SK-N-SH (cell line): ENCODE measurements at regions of chr5 and their contacts with region 1.

Region 1: GRCh38 chr5:139765409-139766217 is 30.0 kb upstream of the PSD2 start:
- DNase-seq: peak; percentile 93
- H3K4me3 ChIP-seq: peak overlapping the region; percentile 56 to 85
- H3K27ac ChIP-seq: peak overlapping the region in 1 of 2 experiments; percentile 56; a peak in 1 of 4 replicates
- H3K4me1 ChIP-seq: peaks cover 2 to 29% of the 10 kb centered on the region in 2 experiments; a peak in 3 of 4 replicates
- H3K27me3 ChIP-seq: no peaks in the 10 kb centered on the region
- CTCF ChIP-seq: peak; percentile 97
- EP300 ChIP-seq: peak in 1 of 2 experiments; percentile 14; a peak in 1 of 4 replicates
- RAD21 ChIP-seq: peak; percentile 73

Region 2: DNA sequence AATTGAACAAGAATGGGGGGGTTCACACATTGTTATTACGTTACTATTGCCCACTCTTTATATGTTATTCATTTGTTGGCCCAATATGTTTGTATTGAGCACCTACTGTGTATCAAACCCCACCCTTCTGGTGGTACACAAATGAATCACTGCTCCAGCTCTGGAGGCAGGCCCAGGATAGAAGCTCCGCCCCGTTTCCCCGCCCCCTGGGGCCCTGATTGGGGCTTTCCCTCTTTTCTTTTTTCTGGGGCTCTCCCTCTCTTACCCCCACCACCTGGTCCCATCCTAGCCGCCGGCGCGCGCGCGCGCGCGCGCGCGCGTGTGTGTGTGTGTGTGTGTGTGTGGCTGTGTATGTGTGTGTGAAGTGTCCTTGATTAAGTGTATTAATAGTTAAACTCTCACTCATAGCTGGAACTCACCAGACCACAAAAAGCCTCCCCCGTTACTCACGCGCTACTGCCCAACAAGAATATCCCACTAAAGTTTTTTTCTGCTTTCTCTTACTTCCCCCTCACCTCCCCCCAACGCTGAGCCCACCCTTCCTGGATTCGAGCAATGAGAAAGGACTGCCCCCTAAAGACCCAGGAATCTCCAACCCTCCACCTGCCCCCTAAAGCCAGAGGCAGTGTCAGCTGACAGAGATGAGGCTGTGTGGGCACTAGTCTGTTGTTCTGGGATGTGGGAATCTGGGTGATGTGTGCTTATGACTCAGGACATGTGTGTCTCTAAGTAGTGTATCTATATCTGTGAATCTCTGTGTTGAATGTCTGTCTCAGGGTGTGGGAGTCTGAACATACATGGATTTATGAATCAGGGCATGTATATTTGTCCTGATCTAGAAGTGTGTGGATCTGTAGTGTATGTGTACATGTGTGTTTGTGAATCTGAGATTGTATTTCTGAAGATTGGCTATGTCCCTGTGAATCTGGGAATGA is 113.5 kb before region 1 on chr5:
- CTCF ChIA-PET with region 1: interaction called, 627 read pairs
- POLR2A ChIA-PET with region 1: interaction called, 5 read pairs
- DNase-seq: peak; percentile 89
- H3K4me3 ChIP-seq: peak overlapping the region; percentile 19 to 91; a peak in 3 of 4 replicates
- H3K27ac ChIP-seq: peak overlapping the region; percentile 78 to 96
- H3K4me1 ChIP-seq: peaks cover 54 to 66% of the 10 kb centered on the region in 2 experiments
- H3K27me3 ChIP-seq: no peaks in the 10 kb centered on the region
- CTCF ChIP-seq: no peak
- EP300 ChIP-seq: 0 out of 4 replicates have a peak, but pooled peaks of 1 of the 2 experiments have one; percentile 10
- RAD21 ChIP-seq: no peak

Region 3: GRCh38 chr5:139684881-139685749 is 80.5 kb before region 1 on chr5:
- CTCF ChIA-PET with region 1: interaction called, 76 read pairs
- POLR2A ChIA-PET with region 1: interaction called, 3 read pairs
- DNase-seq: peak; percentile 76
- H3K4me3 ChIP-seq: no peak overlapping the region
- H3K27ac ChIP-seq: peak overlapping the region in 1 of 2 experiments; percentile 48; a peak in 1 of 4 replicates
- H3K4me1 ChIP-seq: peaks cover 18 to 59% of the 10 kb centered on the region in 2 experiments
- H3K27me3 ChIP-seq: no peaks in the 10 kb centered on the region
- CTCF ChIP-seq: peak; percentile 34
- EP300 ChIP-seq: no peak
- RAD21 ChIP-seq: peak; percentile 31

Region 4: GRCh38 chr5:139696894-139697658 is 68.5 kb before region 1 on chr5:
- CTCF ChIA-PET with region 1: interaction called, 76 read pairs
- POLR2A ChIA-PET with region 1: no interaction called
- DNase-seq: peak; percentile 82
- H3K4me3 ChIP-seq: peak overlapping the region in 1 of 2 experiments; percentile 30; a peak in 2 of 4 replicates
- H3K27ac ChIP-seq: peak overlapping the region; percentile 87 to 97
- H3K4me1 ChIP-seq: peaks cover 41 to 58% of the 10 kb centered on the region in 2 experiments; a peak in 3 of 4 replicates
- H3K27me3 ChIP-seq: no peaks in the 10 kb centered on the region
- CTCF ChIP-seq: no peak
- EP300 ChIP-seq: peak in 1 of 2 experiments; percentile 84; a peak in 1 of 4 replicates
- RAD21 ChIP-seq: no peak

Region 5: GRCh38 chr5:139731281-139731680 is 34.3 kb before region 1 on chr5:
- CTCF ChIA-PET with region 1: interaction called, 14 read pairs
- POLR2A ChIA-PET with region 1: no interaction called
- DNase-seq: no peak
- H3K4me3 ChIP-seq: no peak overlapping the region
- H3K27ac ChIP-seq: no peak overlapping the region
- H3K4me1 ChIP-seq: peaks cover 0 to 2% of the 10 kb centered on the region in 2 experiments; a peak in 1 of 4 replicates
- H3K27me3 ChIP-seq: no peaks in the 10 kb centered on the region
- CTCF ChIP-seq: no peak
- EP300 ChIP-seq: no peak
- RAD21 ChIP-seq: no peak

Region 6: DNA sequence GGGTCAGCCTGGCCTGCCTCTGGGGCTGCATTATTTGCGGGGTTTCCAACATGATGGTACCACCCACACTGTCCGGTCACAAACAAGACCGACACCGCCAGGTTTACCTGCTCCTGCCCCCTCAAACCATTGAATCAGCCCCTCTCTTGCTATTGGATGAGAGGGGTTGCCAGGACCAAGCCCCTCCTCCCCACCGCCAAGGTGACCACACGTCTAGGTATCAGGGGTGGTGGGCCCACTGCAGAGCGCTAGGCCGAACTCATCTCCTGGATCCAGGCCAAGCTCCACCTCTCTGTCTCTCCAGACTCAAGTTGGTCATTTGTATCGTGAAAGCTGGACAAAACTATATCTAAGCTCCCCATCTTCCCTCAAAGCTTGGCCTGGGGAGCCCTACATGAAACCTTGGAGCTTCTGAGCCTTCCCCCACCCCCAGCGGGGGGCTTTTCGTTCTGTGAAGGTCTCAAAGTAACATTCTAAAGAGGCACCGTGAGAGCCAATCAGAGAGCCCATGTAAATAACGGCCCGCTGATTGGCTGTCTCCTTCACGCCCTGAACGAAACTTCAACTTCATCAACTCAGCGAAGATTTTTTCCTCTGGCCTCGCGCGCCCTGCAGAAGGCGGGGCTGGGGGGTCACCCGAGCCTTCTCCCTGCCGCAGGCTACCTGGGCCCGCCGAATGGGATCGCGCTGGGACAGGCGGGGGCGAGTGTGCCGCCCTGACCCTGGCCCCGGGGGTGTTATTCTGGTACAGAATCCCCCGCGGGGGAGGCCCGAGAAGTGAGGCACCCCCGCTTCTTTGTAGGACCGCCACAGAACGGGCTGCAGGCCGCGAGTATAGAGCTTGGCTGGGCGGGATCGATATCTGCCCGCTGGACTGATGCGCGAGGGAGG is 19.6 kb before region 1 on chr5:
- CTCF ChIA-PET with region 1: interaction called, 45 read pairs
- POLR2A ChIA-PET with region 1: no interaction called
- DNase-seq: peak; percentile 85
- H3K4me3 ChIP-seq: peak overlapping the region; percentile 33 to 54
- H3K27ac ChIP-seq: peak overlapping the region in 1 of 2 experiments; percentile 69; a peak in 2 of 4 replicates
- H3K4me1 ChIP-seq: peaks cover 29 to 33% of the 10 kb centered on the region in 2 experiments; a peak in 3 of 4 replicates
- H3K27me3 ChIP-seq: no peaks in the 10 kb centered on the region
- CTCF ChIP-seq: no peak
- EP300 ChIP-seq: no peak
- RAD21 ChIP-seq: no peak